ENCODE measurements at regions of chr17 and their contacts with region 1.

Region 1: DNA sequence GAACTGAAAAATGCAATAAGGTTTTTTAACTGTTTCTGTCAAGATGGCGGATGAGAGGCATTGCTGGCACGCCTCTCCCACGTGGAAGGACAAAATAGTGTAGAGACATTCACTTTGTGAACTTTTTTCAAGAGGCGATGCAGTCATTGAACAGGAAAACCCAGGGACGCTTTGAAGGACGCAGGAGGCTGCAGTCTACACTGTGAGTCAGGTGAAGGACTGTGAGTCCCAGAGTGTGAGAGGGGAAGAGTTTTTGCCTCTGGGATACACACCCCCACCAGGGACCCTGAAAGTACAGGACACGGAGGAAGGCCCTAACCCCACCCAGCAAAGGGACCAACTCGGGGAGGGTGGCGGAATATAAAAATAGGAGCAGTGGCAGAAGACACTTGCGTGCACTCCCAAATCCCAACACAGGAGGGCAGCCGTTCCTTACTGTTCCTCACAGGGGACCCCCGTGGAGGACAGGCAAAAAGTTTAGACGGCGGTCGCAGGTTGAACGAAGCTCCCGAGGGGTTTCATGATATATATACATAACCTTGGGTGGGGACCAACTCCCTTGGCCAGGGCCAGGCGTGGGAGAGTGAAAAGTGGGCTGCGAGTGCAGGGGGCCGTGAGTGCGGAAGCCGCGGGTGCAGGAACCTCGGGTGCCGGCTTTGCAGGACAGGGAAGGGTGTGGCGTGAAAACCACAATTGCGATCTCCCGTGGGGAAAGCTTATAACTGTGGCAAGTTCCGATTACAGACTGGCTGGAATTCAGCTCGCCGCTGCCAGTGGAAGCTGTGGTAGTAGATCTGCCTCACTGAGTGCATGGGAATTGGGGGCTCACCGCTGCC is 82.0 kb upstream of the ALOX12 start:
- DNase-seq: peak in 1 of 2 experiments; percentile 67
- H3K4me3 ChIP-seq: no peak overlapping the region
- H3K27ac ChIP-seq: no peak overlapping the region
- H3K4me1 ChIP-seq: peaks cover 4% of the 10 kb centered on the region
- H3K27me3 ChIP-seq: no peaks in the 10 kb centered on the region
- CTCF ChIP-seq: peak; percentile 94

Region 2: GRCh38 chr17:6753006-6753445 is 160.8 kb before region 1 on chr17:
- CTCF ChIA-PET with region 1: no interaction called
- POLR2A ChIA-PET with region 1: no interaction called
- intact Hi-C with region 1: loop called (anchors 5 kb)
- DNase-seq: peak in 1 of 2 experiments; percentile 60
- H3K4me3 ChIP-seq: peak overlapping the region; percentile 10; the same call in 1 of the 2 replicates
- H3K27ac ChIP-seq: peak overlapping the region; percentile 94
- H3K4me1 ChIP-seq: peaks cover 22% of the 10 kb centered on the region
- H3K27me3 ChIP-seq: no peaks in the 10 kb centered on the region
- CTCF ChIP-seq: no peak

Region 3: DNA sequence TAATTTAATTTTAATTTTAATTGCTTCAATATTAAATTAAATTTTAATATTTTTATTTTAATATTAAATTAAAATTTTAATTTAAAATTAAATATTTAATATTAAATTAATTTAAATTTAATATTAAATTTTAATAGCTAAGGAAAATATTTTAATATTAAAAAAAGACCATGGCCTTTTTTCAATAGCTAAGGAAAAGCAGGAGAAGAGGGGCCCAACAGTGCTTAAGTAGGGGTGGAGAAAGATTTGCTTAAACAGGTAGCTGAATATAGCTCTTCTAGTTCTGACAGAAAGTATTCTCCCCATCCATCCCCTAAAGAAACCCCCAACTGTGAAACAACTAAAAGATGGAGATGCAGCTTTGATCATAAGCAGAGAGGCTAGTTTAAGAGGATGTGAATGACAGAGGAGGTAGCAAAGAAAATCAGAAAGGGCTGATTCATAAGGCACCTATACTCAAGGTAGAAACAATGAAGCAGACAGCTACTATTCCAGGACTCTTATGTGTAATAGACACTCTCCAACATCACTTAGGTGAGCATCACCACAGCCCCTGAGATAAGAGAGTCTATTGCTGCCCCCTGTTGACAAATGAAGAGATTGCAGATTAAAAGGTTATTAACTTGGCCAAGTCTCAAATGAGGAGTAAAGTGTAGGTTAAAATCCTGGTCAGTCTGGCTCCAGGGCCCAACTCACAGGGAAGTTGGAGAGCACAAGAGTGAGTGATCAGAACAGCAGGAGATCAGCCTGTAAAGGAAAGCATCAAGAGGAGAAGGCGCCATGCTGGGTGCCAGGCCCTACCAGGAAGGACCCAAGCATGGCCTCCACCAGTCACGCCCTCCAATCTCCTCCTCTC is 90.8 kb after region 1 on chr17:
- CTCF ChIA-PET with region 1: interaction called, 12 read pairs
- POLR2A ChIA-PET with region 1: no interaction called
- intact Hi-C with region 1: loop called (anchors 1 kb)
- DNase-seq: peak; percentile 49 to 73
- H3K4me3 ChIP-seq: no peak overlapping the region
- H3K27ac ChIP-seq: no peak overlapping the region
- H3K4me1 ChIP-seq: no peaks in the 10 kb centered on the region
- H3K27me3 ChIP-seq: no peaks in the 10 kb centered on the region
- CTCF ChIP-seq: peak; percentile 95

Region 4: GRCh38 chr17:7035591-7036368 is 122.0 kb after region 1 on chr17 and contains the start of gene SLC16A13:
- CTCF ChIA-PET with region 1: interaction called, 12 read pairs
- POLR2A ChIA-PET with region 1: no interaction called
- intact Hi-C with region 1: no loop called
- DNase-seq: peak; percentile 93 to 99
- H3K4me3 ChIP-seq: peak within 1 kb of the TSS; percentile 76
- H3K27ac ChIP-seq: peak within 1 kb of the TSS; percentile 71
- H3K4me1 ChIP-seq: peaks cover 20% of the 10 kb centered on the region
- H3K27me3 ChIP-seq: no peaks in the 10 kb centered on the region
- CTCF ChIP-seq: no peak
- total RNA-seq, gene SLC16A13: 33.4 and 40.6 TPM in 2 replicates

Region 5: DNA sequence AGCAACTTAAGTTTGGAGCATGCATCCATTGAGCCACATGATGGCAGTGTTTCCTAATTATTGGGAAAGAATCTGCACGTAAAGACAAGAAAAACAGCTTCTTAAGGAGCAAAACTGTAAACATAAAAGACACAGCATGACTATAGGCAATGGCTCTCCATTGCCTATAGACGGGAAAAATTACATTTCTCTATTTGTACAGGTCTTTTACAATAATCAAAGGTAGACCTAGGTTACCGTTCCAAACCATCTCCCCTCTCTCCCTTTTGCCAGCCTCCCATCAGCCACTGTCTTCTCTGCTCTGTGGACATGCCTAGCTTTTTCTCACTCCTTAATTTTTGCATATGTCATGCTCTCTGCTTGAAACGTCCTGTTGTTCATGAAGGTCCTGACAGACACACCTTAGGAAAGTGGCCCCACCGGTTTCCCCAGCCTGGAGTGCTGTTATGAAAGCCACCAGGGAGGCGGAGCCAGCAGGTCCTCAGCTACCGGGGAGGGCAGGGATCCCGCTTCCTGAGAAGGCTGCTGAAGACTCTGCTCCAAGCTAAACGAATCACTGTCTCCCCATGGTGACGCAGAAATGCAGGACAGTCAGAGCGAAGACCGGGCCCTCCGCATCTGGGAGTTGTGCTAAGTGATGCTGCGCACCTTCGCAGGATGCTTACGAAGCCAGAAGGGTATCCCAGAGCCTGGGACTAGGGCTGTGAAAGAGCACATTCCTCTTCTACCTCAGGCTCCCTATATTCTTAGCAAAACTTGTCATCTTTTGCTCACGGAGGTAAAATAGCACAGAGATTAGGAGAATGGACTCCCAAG is 132.3 kb after region 1 on chr17:
- CTCF ChIA-PET with region 1: no interaction called
- POLR2A ChIA-PET with region 1: no interaction called
- intact Hi-C with region 1: no loop called
- DNase-seq: peak; percentile 96
- H3K4me3 ChIP-seq: peak overlapping the region; percentile 55
- H3K27ac ChIP-seq: peak overlapping the region; percentile 97
- H3K4me1 ChIP-seq: peaks cover 48% of the 10 kb centered on the region
- H3K27me3 ChIP-seq: no peaks in the 10 kb centered on the region
- CTCF ChIP-seq: peak; percentile 95

Region 6: DNA sequence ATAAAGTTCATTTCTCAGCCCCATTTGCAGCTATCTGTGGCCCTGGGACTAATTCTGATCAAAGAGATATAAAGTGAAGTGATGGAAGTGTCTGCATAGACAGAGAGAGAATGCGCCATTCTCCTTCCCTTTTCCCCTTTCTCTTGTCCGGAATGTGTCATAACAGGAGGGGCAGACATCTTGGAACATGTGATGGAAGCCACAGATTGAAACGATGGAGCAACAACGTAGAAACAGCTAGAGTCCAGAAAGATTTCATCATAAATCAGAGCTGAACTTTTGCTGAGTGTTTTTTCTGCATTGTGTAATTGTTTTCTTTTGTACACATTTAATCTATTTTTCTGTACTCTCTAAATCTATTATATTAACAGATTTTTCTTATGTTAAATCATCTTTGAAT is 254.0 kb after region 1 on chr17:
- CTCF ChIA-PET with region 1: no interaction called
- POLR2A ChIA-PET with region 1: no interaction called
- intact Hi-C with region 1: loop called (anchors 10 kb)
- DNase-seq: no peak
- H3K4me3 ChIP-seq: no peak overlapping the region
- H3K27ac ChIP-seq: no peak overlapping the region
- H3K4me1 ChIP-seq: peaks cover 4% of the 10 kb centered on the region; the same call in 1 of the 2 replicates
- H3K27me3 ChIP-seq: no peaks in the 10 kb centered on the region
- CTCF ChIP-seq: no peak